ENCODE measurements at regions of chr1 and their contacts with region 1.

Region 1: DNA sequence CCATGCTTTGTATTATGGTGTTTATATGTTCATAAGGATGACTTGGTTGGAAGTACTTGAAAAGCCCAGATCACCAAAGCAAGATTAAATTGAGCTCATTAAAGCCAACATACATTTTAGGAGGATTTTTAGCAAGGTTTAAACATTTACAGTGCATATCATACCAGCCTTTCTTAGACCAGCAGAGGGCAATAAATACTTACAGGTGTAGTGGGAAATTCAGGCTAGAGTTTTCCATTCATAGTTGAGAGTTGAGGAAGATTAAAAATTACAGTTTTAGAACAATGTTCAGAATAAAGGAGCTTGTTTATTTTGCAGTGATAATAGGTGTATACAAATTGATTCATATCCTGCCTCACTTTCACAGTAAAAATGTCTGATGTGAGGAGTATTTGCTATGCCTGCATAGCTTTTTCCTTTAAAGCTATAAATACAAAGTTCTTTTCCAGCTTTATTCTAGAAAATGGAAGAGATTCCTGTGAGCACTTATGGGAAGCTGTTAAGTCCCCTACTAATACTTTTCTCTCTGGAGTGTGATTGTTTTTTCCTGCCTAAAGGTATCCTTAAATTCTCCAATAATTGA is 35.3 kb downstream of the DTL start:
- DNase-seq: no peak
- H3K4me3 Mint-ChIP-seq: no peak overlapping the region
- H3K27ac Mint-ChIP-seq: no peak overlapping the region
- H3K4me1 Mint-ChIP-seq: no peaks in the 10 kb centered on the region
- H3K27me3 Mint-ChIP-seq: no peaks in the 10 kb centered on the region
- CTCF ChIP-seq: peak; percentile 47

Region 2: DNA sequence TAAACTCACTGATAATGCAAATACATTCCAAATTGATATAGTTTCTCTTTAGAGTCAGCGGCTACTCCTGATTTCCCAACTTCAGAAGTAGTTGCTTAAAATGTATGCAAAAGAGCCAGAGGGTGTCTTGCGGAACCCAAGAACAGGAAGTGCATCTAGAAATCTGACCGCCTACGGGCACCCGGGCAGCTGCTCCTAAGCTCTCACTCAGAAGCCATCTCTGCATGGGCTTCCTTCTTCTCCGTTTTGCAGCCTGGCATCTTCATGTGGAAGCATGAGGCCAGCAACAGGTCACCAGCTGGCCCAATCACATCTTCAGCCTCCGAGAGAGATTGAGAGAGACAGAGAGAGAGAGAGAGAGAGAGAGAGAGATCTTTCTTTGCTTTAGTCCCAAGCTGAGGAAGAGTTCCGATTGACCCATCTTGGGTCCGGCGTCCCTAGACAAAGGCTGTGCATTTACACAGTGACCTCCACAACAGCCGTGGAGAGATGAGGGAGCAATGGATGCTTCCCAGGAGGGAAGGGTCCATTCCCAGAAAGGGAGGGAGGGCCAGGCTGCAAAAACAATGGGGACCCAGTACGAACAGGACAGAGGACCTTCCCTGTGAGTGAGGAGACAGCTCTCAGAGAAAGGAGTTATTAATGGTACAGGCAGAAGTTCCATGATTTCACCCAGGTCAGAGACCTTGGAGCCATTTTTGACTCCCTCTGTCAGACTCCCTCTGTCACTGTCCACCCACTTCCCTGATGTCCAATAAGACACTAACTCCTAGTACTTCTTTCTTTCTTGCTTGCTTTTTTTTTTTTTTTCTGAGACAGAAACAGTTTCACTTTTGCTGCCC is 463.7 kb before region 1 on chr1:
- CTCF ChIA-PET with region 1: no interaction called
- intact Hi-C with region 1: no loop called
- DNase-seq: no peak
- H3K4me3 Mint-ChIP-seq: no peak overlapping the region
- H3K27ac Mint-ChIP-seq: no peak overlapping the region
- H3K4me1 Mint-ChIP-seq: peaks cover 42% of the 10 kb centered on the region
- H3K27me3 Mint-ChIP-seq: no peaks in the 10 kb centered on the region
- CTCF ChIP-seq: no peak

Region 3: DNA sequence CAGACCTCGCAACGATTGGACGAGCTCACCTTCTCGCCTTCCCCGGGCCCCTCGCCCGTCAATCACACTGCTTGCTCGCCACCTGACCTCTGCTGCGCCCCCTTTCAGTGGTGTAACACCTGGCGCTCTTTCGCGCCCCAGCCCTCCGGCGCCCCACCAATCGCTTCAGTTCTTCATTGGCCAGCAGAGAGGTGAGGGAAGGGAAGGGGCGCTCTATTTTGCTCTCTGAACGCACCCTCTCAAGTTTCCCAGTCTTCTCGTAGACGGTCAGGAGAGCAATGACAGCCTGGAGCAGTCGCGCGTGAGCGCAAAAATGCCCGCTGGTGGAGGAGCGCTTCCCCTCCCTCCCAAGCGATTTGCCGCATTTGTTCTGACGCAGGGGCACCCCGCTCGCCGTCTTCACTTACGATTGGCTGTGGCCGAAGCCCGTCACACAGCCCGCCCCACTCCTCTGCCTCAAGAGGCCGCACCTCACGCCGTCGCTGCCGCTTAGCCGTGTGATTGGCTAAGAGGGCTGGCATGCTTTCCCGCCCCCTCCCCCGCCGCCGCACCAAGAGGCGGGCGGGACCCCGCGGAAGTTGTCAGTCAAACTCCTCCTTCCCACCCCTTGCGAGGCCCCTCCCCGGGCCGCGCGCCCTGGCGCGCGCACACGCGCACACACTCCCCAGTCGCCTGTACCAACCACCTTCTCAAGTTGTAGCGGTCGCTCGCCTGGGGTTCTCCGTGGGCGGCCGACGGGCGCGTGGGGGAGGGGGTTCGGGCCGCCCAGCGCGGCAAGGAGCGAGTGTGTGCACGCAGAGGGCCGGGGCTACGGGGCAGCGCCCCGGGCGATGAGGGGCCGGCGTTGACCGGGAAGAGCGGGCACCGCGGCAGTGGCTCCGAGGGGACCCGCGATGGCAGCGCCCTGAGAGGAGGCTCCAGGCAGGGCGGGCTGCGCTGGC is 214.2 kb after region 1 on chr1 and contains the start of gene PPP2R5A:
- CTCF ChIA-PET with region 1: interaction called, 11 read pairs
- intact Hi-C with region 1: no loop called
- DNase-seq: peak; percentile 99
- H3K4me3 Mint-ChIP-seq: peak within 1 kb of the TSS; percentile 79
- H3K27ac Mint-ChIP-seq: peak within 1 kb of the TSS; percentile 94
- H3K4me1 Mint-ChIP-seq: peaks cover 20% of the 10 kb centered on the region
- H3K27me3 Mint-ChIP-seq: no peaks in the 10 kb centered on the region
- CTCF ChIP-seq: no peak
- total RNA-seq, gene PPP2R5A: 42.9 and 45.2 TPM in 2 replicates

Region 4: GRCh38 chr1:212291505-212292134 is 220.8 kb after region 1 on chr1:
- CTCF ChIA-PET with region 1: interaction called, 31 read pairs
- intact Hi-C with region 1: loop called (anchors 1 kb)
- DNase-seq: peak; percentile 36
- H3K4me3 Mint-ChIP-seq: peak overlapping the region; percentile 15
- H3K27ac Mint-ChIP-seq: peak overlapping the region; percentile 60
- H3K4me1 Mint-ChIP-seq: peaks cover 63% of the 10 kb centered on the region
- H3K27me3 Mint-ChIP-seq: no peaks in the 10 kb centered on the region
- CTCF ChIP-seq: peak; percentile 66

Region 5: DNA sequence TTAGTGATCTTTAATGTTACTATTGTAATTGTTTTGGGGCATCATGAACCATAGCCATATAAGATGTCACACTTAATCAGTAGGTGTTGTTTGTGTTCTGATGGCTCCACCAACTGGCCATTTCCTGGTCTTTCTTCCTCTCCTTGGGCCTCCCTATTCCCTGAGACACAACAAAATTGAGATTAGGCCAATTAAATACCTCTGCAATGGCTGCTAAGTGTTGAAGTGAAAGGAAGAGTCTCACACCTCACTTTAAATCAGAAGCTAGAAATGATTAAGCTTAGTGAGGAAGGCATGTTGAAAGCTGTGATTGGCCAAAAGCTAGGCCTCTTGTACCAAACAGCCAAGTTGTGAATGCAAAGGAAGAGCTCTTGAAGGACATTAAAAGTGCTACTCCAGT is 245.1 kb after region 1 on chr1:
- CTCF ChIA-PET with region 1: interaction called, 10 read pairs
- intact Hi-C with region 1: loop called (anchors 1 kb)
- DNase-seq: peak; percentile 41
- H3K4me3 Mint-ChIP-seq: no peak overlapping the region
- H3K27ac Mint-ChIP-seq: peak overlapping the region; percentile 14
- H3K4me1 Mint-ChIP-seq: peaks cover 13% of the 10 kb centered on the region
- H3K27me3 Mint-ChIP-seq: no peaks in the 10 kb centered on the region
- CTCF ChIP-seq: peak; percentile 33

Region 6: DNA sequence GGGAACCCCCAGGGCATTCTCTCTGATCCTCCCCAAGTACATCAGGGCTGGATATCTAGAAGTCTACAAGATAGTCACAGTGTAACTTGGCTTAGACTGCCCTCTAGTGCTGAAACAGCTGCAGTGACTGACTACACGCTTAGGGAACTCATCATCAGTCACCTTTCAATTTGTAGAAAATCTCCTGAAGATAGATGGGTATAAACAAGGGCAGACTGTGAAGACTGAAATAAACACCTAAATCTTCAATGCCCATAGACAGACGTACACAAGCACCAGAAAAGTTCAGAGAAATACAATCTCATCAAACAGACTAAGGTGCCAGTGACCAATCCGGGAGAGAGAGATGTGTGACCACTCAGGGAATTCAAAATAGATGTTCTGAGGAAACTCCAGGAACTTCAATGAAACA is 297.3 kb after region 1 on chr1:
- CTCF ChIA-PET with region 1: interaction called, 7 read pairs
- intact Hi-C with region 1: loop called (anchors 2 kb)
- DNase-seq: peak; percentile 66
- H3K4me3 Mint-ChIP-seq: no peak overlapping the region
- H3K27ac Mint-ChIP-seq: no peak overlapping the region
- H3K4me1 Mint-ChIP-seq: no peaks in the 10 kb centered on the region
- H3K27me3 Mint-ChIP-seq: no peaks in the 10 kb centered on the region
- CTCF ChIP-seq: peak; percentile 86

Region 7: GRCh38 chr1:212455803-212456528 is 385.2 kb after region 1 on chr1:
- CTCF ChIA-PET with region 1: interaction called, 15 read pairs
- intact Hi-C with region 1: loop called (anchors 1 kb)
- DNase-seq: peak; percentile 92
- H3K4me3 Mint-ChIP-seq: no peak overlapping the region
- H3K27ac Mint-ChIP-seq: no peak overlapping the region
- H3K4me1 Mint-ChIP-seq: no peaks in the 10 kb centered on the region
- H3K27me3 Mint-ChIP-seq: no peaks in the 10 kb centered on the region
- CTCF ChIP-seq: peak; percentile 98